Natural killer cell (primary cell): ENCODE measurements at regions of chr5 and their contacts with region 1.

Region 1: GRCh38 chr5:97162045-97162444 is 19.6 kb upstream of the LIX1 start:
- DNase-seq: peak in 1 of 2 donors; percentile 83
- ATAC-seq: peak in 1 of 3 donors; percentile 63
- H3K4me3 ChIP-seq: no peak overlapping the region
- H3K4me3 Mint-ChIP-seq: no peak overlapping the region
- H3K27ac ChIP-seq: no peak overlapping the region
- H3K27ac Mint-ChIP-seq: no peak overlapping the region
- H3K4me1 ChIP-seq: no peaks in the 10 kb centered on the region
- H3K4me1 Mint-ChIP-seq: peaks cover 0 to 12% of the 10 kb centered on the region in 2 donors
- H3K27me3 ChIP-seq: no peaks in the 10 kb centered on the region
- H3K27me3 Mint-ChIP-seq: peaks cover 7 to 16% of the 10 kb centered on the region in 2 donors
- CTCF ChIP-seq: peak; percentile 87

Region 2: GRCh38 chr5:96344678-96345577 is 817.1 kb before region 1 on chr5:
- intact Hi-C with region 1: loop called (anchors 10 kb)
- DNase-seq: peak in 1 of 2 donors; percentile 79
- ATAC-seq: peak; percentile 82 to 84 (median 83)
- H3K4me3 ChIP-seq: no peak overlapping the region
- H3K4me3 Mint-ChIP-seq: no peak overlapping the region
- H3K27ac ChIP-seq: no peak overlapping the region
- H3K27ac Mint-ChIP-seq: no peak overlapping the region
- H3K4me1 ChIP-seq: peaks cover 3% of the 10 kb centered on the region
- H3K4me1 Mint-ChIP-seq: no peaks in the 10 kb centered on the region
- H3K27me3 ChIP-seq: peaks cover 7% of the 10 kb centered on the region
- H3K27me3 Mint-ChIP-seq: peaks cover 9 to 25% of the 10 kb centered on the region in 2 donors
- CTCF ChIP-seq: peak; percentile 22

Region 3: GRCh38 chr5:96614110-96614691 is 547.8 kb before region 1 on chr5:
- intact Hi-C with region 1: loop called (anchors 2 kb)
- DNase-seq: peak in 1 of 2 donors; percentile 77
- ATAC-seq: peak; percentile 21 to 71 (median 61)
- H3K4me3 ChIP-seq: no peak overlapping the region
- H3K4me3 Mint-ChIP-seq: no peak overlapping the region
- H3K27ac ChIP-seq: no peak overlapping the region
- H3K27ac Mint-ChIP-seq: peak overlapping the region in 1 of 2 donors; percentile 57
- H3K4me1 ChIP-seq: peaks cover 6% of the 10 kb centered on the region
- H3K4me1 Mint-ChIP-seq: peaks cover 6 to 7% of the 10 kb centered on the region in 2 donors
- H3K27me3 ChIP-seq: no peaks in the 10 kb centered on the region
- H3K27me3 Mint-ChIP-seq: peaks cover 12 to 43% of the 10 kb centered on the region in 2 donors
- CTCF ChIP-seq: peak; percentile 65

Region 4: GRCh38 chr5:96752341-96753016 is 409.6 kb before region 1 on chr5:
- intact Hi-C with region 1: loop called (anchors 1 kb)
- DNase-seq: peak in 1 of 2 donors; percentile 85
- ATAC-seq: peak; percentile 58 to 78 (median 61)
- H3K4me3 ChIP-seq: no peak overlapping the region
- H3K4me3 Mint-ChIP-seq: no peak overlapping the region
- H3K27ac ChIP-seq: no peak overlapping the region
- H3K27ac Mint-ChIP-seq: peak overlapping the region in 1 of 2 donors; percentile 78
- H3K4me1 ChIP-seq: no peaks in the 10 kb centered on the region
- H3K4me1 Mint-ChIP-seq: peaks cover 0 to 9% of the 10 kb centered on the region in 2 donors
- H3K27me3 ChIP-seq: no peaks in the 10 kb centered on the region
- H3K27me3 Mint-ChIP-seq: no peaks in the 10 kb centered on the region
- CTCF ChIP-seq: peak; percentile 83

Region 5: DNA sequence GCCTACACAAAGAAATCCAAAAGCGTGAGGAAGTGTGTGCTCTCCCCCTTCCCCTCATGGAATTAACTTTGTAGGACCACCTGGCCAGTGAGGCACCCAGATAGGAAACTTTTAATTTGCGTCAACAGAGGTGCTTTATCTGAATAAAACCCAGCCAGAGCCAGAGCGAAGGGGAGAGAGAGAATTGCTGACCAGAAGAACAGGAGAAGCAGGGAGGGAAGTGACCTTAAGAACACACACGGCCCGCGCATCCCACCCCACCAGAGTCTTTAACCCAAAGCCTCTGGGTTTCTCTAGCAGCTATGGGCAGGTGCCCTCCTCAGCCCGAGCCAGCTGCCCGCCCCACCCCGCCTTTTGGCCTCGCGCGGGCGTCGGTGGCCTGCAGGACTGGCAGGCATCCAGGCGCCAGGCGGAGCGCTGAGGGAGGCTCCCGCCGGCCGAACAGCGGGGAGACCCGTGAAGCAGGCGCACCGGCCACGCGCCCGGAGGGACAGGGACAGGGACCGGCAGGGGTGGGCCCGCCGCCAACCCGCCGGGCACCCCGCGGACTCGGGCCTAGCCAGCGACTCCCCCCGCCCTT is 354.9 kb before region 1 on chr5:
- intact Hi-C with region 1: loop called (anchors 2 kb)
- DNase-seq: no peak
- ATAC-seq: no peak
- H3K4me3 ChIP-seq: peak overlapping the region; percentile 73
- H3K4me3 Mint-ChIP-seq: peak overlapping the region; percentile 99
- H3K27ac ChIP-seq: peak overlapping the region; percentile 93
- H3K27ac Mint-ChIP-seq: peak overlapping the region; percentile 99
- H3K4me1 ChIP-seq: peaks cover 36% of the 10 kb centered on the region
- H3K4me1 Mint-ChIP-seq: peaks cover 56 to 57% of the 10 kb centered on the region in 2 donors
- H3K27me3 ChIP-seq: no peaks in the 10 kb centered on the region
- H3K27me3 Mint-ChIP-seq: no peaks in the 10 kb centered on the region
- CTCF ChIP-seq: no peak

Region 6: GRCh38 chr5:96868603-96869371 is 293.3 kb before region 1 on chr5:
- intact Hi-C with region 1: loop called (anchors 1 kb)
- DNase-seq: peak in 1 of 2 donors; percentile 78
- ATAC-seq: peak; percentile 87 to 99 (median 99)
- H3K4me3 ChIP-seq: no peak overlapping the region
- H3K4me3 Mint-ChIP-seq: no peak overlapping the region
- H3K27ac ChIP-seq: no peak overlapping the region
- H3K27ac Mint-ChIP-seq: no peak overlapping the region
- H3K4me1 ChIP-seq: no peaks in the 10 kb centered on the region
- H3K4me1 Mint-ChIP-seq: peaks cover 6 to 7% of the 10 kb centered on the region in 2 donors
- H3K27me3 ChIP-seq: no peaks in the 10 kb centered on the region
- H3K27me3 Mint-ChIP-seq: peaks cover 0 to 4% of the 10 kb centered on the region in 2 donors
- CTCF ChIP-seq: peak; percentile 90

Region 7: DNA sequence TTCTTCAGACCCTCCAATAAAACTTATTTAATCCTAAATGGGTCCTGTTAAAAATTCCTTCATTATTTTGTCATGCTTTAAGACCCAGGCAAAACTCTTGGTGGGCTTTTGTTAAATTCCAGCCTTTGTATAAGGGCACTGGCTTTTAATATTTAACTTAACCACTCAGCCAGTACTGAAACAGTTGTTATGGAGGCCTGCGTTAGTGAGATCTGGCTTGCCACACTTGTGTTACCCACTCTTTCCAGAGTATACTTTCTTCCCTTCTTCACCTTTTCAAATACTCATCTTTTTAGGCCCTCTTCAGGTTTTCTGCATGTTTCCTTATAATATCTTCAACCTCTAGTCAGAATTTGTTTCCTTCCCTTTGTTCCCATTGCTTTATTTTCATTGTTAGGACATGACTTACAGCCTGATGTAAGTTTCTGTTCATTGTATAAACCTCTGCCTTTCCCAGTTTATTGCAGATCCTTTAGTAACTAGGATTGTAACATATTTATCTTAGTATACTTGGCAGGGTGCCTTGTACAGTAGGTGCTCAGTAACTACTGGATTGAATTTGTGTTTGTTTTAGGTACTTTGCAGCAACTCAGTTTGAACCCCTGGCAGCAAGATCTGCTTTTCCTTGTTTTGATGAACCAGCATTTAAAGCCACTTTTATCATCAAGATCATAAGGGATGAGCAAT is 177.4 kb before region 1 on chr5:
- intact Hi-C with region 1: loop called (anchors 10 kb)
- DNase-seq: no peak
- ATAC-seq: no peak
- H3K4me3 ChIP-seq: no peak overlapping the region
- H3K4me3 Mint-ChIP-seq: peak overlapping the region; percentile 19
- H3K27ac ChIP-seq: no peak overlapping the region
- H3K27ac Mint-ChIP-seq: peak overlapping the region; percentile 8 to 46
- H3K4me1 ChIP-seq: peaks cover 10% of the 10 kb centered on the region
- H3K4me1 Mint-ChIP-seq: peaks cover 53 to 56% of the 10 kb centered on the region in 2 donors
- H3K27me3 ChIP-seq: no peaks in the 10 kb centered on the region
- H3K27me3 Mint-ChIP-seq: no peaks in the 10 kb centered on the region
- CTCF ChIP-seq: no peak